ENCODE measurements at regions of chr14 and their contacts with region 1.

Region 1: DNA sequence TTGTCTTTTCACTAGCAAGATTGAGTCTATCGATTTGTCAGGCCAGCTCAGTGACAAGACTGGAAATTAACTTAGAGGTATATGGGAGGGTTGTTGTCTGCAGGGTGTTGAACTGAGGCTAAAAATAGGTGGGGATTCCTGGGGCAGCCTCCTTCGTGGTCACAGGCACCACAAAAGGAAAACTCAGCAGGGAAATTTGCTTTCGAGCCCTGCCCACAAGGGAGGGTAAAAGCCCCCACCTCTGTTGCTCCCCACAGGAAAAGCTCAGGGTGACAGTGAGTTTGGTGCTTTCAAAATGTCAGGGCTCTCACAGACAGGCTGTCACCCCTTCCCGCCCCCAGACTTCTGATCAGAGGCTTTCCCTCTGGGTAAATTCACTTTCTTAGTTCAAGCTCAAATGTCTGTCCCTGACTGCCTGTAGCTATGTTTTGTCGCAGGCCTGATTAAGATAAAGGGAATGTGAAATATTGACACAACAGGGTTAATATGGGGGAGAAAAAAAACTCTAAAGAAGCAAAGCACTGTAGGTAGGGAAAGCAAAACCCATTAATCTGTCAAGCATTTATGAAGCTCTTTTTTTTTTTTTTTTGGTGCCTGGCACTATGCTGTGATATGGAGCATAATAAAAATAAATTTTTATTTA is 11.7 kb upstream of the NFKBIA start:
- DNase-seq: no peak
- H3K4me3 ChIP-seq: no peak overlapping the region
- H3K27ac ChIP-seq: no peak overlapping the region
- H3K4me1 ChIP-seq: peaks cover 39% of the 10 kb centered on the region
- H3K27me3 ChIP-seq: no peaks in the 10 kb centered on the region
- CTCF ChIP-seq: no peak
- POLR2A ChIP-seq: no peak

Region 2: GRCh38 chr14:34671716-34672115 is 744.5 kb before region 1 on chr14:
- CTCF ChIA-PET with region 1: no interaction called
- POLR2A ChIA-PET with region 1: no interaction called
- dilution Hi-C with region 1: no loop called
- intact Hi-C with region 1: loop called (anchors 5 kb)
- DNase-seq: no peak
- H3K4me3 ChIP-seq: no peak overlapping the region
- H3K27ac ChIP-seq: no peak overlapping the region
- H3K4me1 ChIP-seq: peaks cover under 1% of the 10 kb centered on the region
- H3K27me3 ChIP-seq: no peaks in the 10 kb centered on the region
- CTCF ChIP-seq: no peak
- POLR2A ChIP-seq: no peak

Region 3: GRCh38 chr14:35046048-35046741 is 370.0 kb before region 1 on chr14 and contains the start of gene FAM177A1:
- CTCF ChIA-PET with region 1: interaction called, 4 read pairs
- POLR2A ChIA-PET with region 1: no interaction called
- dilution Hi-C with region 1: no loop called
- intact Hi-C with region 1: loop called (anchors 5 kb)
- DNase-seq: peak; percentile 98
- H3K4me3 ChIP-seq: peak within 1 kb of the TSS; percentile 69 to 91 (median 74)
- H3K27ac ChIP-seq: peak within 1 kb of the TSS; percentile 94
- H3K4me1 ChIP-seq: peaks cover 21% of the 10 kb centered on the region
- H3K27me3 ChIP-seq: no peaks in the 10 kb centered on the region
- CTCF ChIP-seq: peak in 1 of 2 donors; percentile 3
- POLR2A ChIP-seq: peak; percentile 61
- total RNA-seq, gene FAM177A1: 48.2 and 64.1 TPM in 2 replicates

Region 4: GRCh38 chr14:35140718-35141581 is 275.3 kb before region 1 on chr14:
- CTCF ChIA-PET with region 1: interaction called, 66 read pairs
- POLR2A ChIA-PET with region 1: interaction called, 3 read pairs
- dilution Hi-C with region 1: no loop called
- intact Hi-C with region 1: loop called (anchors 1 kb)
- DNase-seq: peak; percentile 51
- H3K4me3 ChIP-seq: no peak overlapping the region
- H3K27ac ChIP-seq: no peak overlapping the region
- H3K4me1 ChIP-seq: no peaks in the 10 kb centered on the region
- H3K27me3 ChIP-seq: no peaks in the 10 kb centered on the region
- CTCF ChIP-seq: no peak
- POLR2A ChIP-seq: no peak

Region 5: DNA sequence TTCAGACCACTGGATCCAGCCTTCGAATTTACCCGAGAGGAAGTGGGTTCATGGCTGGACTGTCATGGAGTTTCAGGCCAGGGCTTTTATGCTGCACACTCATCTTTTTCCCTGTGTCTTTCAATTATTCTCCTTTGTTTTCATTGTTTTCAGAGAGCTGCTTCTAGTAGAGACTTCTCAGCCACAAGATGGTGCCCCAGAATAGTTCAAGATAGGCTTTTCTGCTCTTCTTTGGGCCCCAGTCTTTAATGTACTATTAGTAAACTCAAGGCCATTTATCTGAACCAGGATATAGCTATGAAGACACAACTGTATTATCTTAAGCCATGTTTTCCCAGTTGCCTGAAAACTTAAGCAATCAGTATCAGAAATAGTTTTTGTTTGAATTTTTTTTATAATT is 154.5 kb before region 1 on chr14:
- CTCF ChIA-PET with region 1: interaction called, 18 read pairs
- POLR2A ChIA-PET with region 1: no interaction called
- dilution Hi-C with region 1: no loop called
- intact Hi-C with region 1: no loop called
- DNase-seq: peak; percentile 30
- H3K4me3 ChIP-seq: no peak overlapping the region
- H3K27ac ChIP-seq: no peak overlapping the region
- H3K4me1 ChIP-seq: peaks cover 8% of the 10 kb centered on the region
- H3K27me3 ChIP-seq: no peaks in the 10 kb centered on the region
- CTCF ChIP-seq: no peak
- POLR2A ChIP-seq: no peak

Region 6: DNA sequence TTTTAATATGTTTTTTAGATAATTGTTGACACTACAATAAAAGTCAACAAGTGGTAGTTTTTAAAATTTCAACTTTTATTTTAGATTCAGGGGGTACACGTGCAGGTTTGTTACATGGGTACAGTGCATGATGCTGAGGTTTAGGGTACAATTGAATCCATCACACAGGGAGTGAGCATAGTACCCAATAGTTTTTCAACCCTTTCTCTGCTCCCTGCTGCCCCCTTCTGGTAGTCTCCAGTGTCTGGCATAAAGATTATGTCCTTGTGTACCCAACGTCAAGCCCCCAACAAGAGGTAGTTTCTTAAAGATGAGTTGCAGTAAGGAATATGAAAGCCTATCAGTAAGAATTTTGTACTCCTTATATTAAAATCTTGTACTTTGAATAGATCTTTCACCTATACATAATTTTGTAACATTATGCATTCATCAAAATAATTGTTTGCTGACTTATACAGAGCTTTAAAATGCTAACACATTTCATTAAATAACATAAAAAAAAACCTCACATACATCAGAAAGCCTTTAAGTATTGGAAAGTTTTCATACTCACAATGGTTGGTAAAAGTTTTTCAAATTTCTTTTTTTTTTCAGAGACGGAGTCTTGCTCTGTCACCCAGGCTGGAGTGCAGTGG is 398.3 kb after region 1 on chr14:
- CTCF ChIA-PET with region 1: interaction called, 10 read pairs
- POLR2A ChIA-PET with region 1: no interaction called
- dilution Hi-C with region 1: no loop called
- intact Hi-C with region 1: loop called (anchors 5 kb)
- DNase-seq: peak; percentile 66
- H3K4me3 ChIP-seq: no peak overlapping the region
- H3K27ac ChIP-seq: no peak overlapping the region
- H3K4me1 ChIP-seq: no peaks in the 10 kb centered on the region
- H3K27me3 ChIP-seq: peaks cover 2 to 10% of the 10 kb centered on the region in 2 experiments
- CTCF ChIP-seq: peak; percentile 64 to 75
- POLR2A ChIP-seq: no peak